CD8-positive, alpha-beta T cell (primary cell): ENCODE measurements at regions of chr1 and their contacts with region 1.

Region 1: DNA sequence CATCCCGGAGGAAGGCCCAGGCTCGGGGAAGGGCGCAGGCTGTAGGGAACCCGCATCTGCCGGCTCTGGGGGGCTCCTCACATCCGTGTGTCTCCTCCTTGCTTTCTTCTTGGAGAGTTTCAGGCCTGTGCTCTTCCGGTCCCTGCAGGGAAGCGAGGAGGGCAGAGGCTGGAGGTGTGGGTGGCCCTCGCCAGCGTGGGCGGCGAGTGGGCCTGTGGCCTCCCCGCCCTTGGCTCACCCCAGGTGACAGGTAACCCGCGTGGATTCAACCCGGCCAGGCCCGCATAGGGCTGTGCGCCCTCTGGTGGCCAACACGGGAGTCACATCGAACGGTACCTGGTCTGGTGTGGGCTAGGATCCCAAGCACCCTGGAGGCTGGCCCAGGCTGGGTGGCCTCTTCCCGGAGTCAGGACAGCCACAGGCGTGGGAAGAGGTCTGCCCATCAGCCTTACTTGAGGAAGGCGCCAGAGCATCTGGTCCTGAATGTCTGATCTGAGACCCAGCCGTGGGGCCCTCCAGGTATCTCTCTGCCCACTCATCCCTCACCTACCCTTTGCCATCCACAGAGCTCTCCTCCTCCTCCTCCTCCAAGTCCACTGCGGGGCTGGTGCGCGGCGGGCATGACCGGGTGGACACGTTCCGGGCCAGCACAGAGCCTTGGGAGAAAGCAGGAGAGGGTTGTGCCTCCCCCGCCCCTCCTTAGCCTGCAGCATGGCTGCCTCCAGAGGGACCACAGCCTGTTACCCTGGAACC is 9.6 kb upstream of the TNFRSF25 start:
- DNase-seq: peak; percentile 63 to 93 (median 82)
- ATAC-seq: peak; percentile 99
- H3K4me3 ChIP-seq: no peak overlapping the region
- H3K4me3 Mint-ChIP-seq: no peak overlapping the region
- H3K27ac ChIP-seq: no peak overlapping the region
- H3K27ac Mint-ChIP-seq: no peak overlapping the region
- H3K4me1 ChIP-seq: peaks cover 8% of the 10 kb centered on the region
- H3K4me1 Mint-ChIP-seq: peaks cover 6% of the 10 kb centered on the region
- H3K27me3 ChIP-seq: no peaks in the 10 kb centered on the region
- H3K27me3 Mint-ChIP-seq: no peaks in the 10 kb centered on the region
- CTCF ChIP-seq: peak; percentile 84

Region 2: GRCh38 chr1:6325482-6325881 is 150.1 kb before region 1 on chr1:
- CTCF ChIA-PET with region 1: no interaction called
- POLR2A ChIA-PET with region 1: no interaction called
- intact Hi-C with region 1: no loop called
- DNase-seq: no peak
- ATAC-seq: no peak
- H3K4me3 ChIP-seq: no peak overlapping the region
- H3K4me3 Mint-ChIP-seq: no peak overlapping the region
- H3K27ac ChIP-seq: no peak overlapping the region
- H3K27ac Mint-ChIP-seq: no peak overlapping the region
- H3K4me1 ChIP-seq: no peaks in the 10 kb centered on the region
- H3K4me1 Mint-ChIP-seq: no peaks in the 10 kb centered on the region
- H3K27me3 ChIP-seq: no peaks in the 10 kb centered on the region
- H3K27me3 Mint-ChIP-seq: no peaks in the 10 kb centered on the region
- CTCF ChIP-seq: no peak

Region 3: GRCh38 chr1:6359216-6360116 is 116.1 kb before region 1 on chr1:
- CTCF ChIA-PET with region 1: no interaction called
- POLR2A ChIA-PET with region 1: no interaction called
- intact Hi-C with region 1: loop called in 1 of 2 experiments (anchors 5 kb)
- DNase-seq: peak in 7 of 9 experiments; percentile 34 to 80 (median 63)
- ATAC-seq: peak; percentile 69
- H3K4me3 ChIP-seq: peak overlapping the region; percentile 23 to 51
- H3K4me3 Mint-ChIP-seq: peak overlapping the region; percentile 69
- H3K27ac ChIP-seq: peak overlapping the region; percentile 49 to 80
- H3K27ac Mint-ChIP-seq: peak overlapping the region; percentile 85
- H3K4me1 ChIP-seq: peaks cover 41% of the 10 kb centered on the region
- H3K4me1 Mint-ChIP-seq: peaks cover 37% of the 10 kb centered on the region
- H3K27me3 ChIP-seq: no peaks in the 10 kb centered on the region
- H3K27me3 Mint-ChIP-seq: no peaks in the 10 kb centered on the region
- CTCF ChIP-seq: no peak

Region 4: GRCh38 chr1:6438047-6438525 is 37.5 kb before region 1 on chr1:
- CTCF ChIA-PET with region 1: interaction called, 19 read pairs
- POLR2A ChIA-PET with region 1: no interaction called
- intact Hi-C with region 1: no loop called
- DNase-seq: peak; percentile 54 to 82 (median 72)
- ATAC-seq: peak; percentile 75
- H3K4me3 ChIP-seq: no peak overlapping the region
- H3K4me3 Mint-ChIP-seq: no peak overlapping the region
- H3K27ac ChIP-seq: no peak overlapping the region
- H3K27ac Mint-ChIP-seq: no peak overlapping the region
- H3K4me1 ChIP-seq: peaks cover 6% of the 10 kb centered on the region
- H3K4me1 Mint-ChIP-seq: peaks cover 12% of the 10 kb centered on the region
- H3K27me3 ChIP-seq: peaks cover 0 to 8% of the 10 kb centered on the region in 2 experiments
- H3K27me3 Mint-ChIP-seq: peaks cover 26% of the 10 kb centered on the region
- CTCF ChIP-seq: peak; percentile 92

Region 5: DNA sequence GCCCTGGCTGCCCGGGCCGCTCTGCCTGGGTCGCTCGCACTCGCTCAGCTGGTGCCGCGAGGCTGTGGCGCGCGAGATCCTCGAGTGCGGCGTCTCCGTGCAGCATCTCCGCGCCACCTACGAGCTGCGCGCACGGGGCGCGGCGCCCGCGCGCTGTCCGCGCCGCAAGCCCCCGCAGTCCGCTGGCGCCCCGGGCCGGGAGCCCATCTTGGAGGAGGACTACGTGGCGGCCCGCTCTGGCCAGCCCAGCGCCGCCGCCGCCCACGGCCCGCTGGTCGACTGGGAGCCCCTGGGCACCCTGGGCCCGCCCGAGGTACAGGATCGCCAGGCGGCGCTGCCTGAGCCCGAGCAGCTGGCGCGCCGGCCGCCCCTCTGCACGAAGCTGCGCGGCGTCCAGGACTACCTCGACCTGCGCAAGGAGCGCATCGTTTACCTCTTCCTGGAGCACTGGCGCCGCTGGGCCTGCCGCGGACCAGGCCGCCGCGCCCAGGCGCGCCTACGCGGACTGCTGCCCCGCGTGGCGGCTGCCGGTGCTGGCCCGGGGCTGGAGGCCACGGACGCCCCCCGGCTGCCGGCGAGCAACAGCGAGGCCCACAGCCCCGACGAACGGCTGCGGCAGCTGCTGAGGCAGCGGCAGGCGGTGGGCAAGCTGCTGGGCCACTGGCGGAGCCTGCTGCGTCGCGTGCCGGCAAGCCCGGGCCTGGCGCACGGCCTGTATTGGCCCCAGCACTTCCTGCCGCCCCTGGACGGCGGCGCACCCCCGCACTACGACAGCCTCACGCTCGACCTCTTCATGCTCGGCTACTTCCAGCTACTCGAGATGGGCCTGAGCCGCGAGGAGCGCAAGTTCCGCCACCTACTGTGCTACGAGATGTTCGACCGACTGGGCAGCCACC is 20.5 kb before region 1 on chr1:
- CTCF ChIA-PET with region 1: interaction called, 35 read pairs
- POLR2A ChIA-PET with region 1: interaction called, 4 read pairs
- intact Hi-C with region 1: loop called in 1 of 2 experiments (anchors 1 kb)
- DNase-seq: peak in 7 of 9 experiments; percentile 38 to 72 (median 48)
- ATAC-seq: peak; percentile 39
- H3K4me3 ChIP-seq: no peak overlapping the region
- H3K4me3 Mint-ChIP-seq: peak overlapping the region; percentile 15
- H3K27ac ChIP-seq: no peak overlapping the region
- H3K27ac Mint-ChIP-seq: no peak overlapping the region
- H3K4me1 ChIP-seq: peaks cover 9% of the 10 kb centered on the region
- H3K4me1 Mint-ChIP-seq: peaks cover 18% of the 10 kb centered on the region
- H3K27me3 ChIP-seq: peaks cover 0 to 4% of the 10 kb centered on the region in 2 experiments
- H3K27me3 Mint-ChIP-seq: peaks cover 25% of the 10 kb centered on the region
- CTCF ChIP-seq: no peak

Region 6: DNA sequence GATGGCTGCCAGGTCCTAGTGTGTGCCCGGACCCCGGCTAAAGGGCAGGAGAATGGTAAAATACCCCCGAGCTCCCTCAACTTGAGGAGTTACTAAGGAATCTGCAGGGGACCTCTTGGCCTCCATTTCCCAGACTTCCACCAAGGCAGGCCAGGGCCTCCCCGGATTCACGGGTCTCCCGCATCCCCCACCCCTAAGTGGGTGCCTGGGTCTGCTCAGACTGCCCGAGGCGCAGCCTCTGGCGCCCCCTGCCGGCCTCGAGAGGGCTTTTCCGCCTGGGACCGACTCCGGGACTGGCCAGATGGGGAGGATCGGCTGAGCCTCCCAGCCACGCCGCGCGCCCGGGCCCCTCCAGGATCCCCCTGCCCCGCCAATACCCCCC is 14.2 kb after region 1 on chr1:
- CTCF ChIA-PET with region 1: interaction called, 24 read pairs
- POLR2A ChIA-PET with region 1: no interaction called
- intact Hi-C with region 1: no loop called
- DNase-seq: peak; percentile 46 to 87 (median 76)
- ATAC-seq: peak; percentile 60
- H3K4me3 ChIP-seq: peak overlapping the region; percentile 69 to 94
- H3K4me3 Mint-ChIP-seq: peak overlapping the region; percentile 76
- H3K27ac ChIP-seq: no peak overlapping the region
- H3K27ac Mint-ChIP-seq: no peak overlapping the region
- H3K4me1 ChIP-seq: peaks cover 34% of the 10 kb centered on the region
- H3K4me1 Mint-ChIP-seq: peaks cover 23% of the 10 kb centered on the region
- H3K27me3 ChIP-seq: peaks cover 7 to 15% of the 10 kb centered on the region in 2 experiments
- H3K27me3 Mint-ChIP-seq: peaks cover 11% of the 10 kb centered on the region
- CTCF ChIP-seq: peak; percentile 99